Activated CD4-positive, alpha-beta memory T cell treated with anti-CD3 and anti-CD28 coated beads for 36 hours (primary cell): ENCODE measurements at regions of chr18 and their contacts with region 1.

Region 1: DNA sequence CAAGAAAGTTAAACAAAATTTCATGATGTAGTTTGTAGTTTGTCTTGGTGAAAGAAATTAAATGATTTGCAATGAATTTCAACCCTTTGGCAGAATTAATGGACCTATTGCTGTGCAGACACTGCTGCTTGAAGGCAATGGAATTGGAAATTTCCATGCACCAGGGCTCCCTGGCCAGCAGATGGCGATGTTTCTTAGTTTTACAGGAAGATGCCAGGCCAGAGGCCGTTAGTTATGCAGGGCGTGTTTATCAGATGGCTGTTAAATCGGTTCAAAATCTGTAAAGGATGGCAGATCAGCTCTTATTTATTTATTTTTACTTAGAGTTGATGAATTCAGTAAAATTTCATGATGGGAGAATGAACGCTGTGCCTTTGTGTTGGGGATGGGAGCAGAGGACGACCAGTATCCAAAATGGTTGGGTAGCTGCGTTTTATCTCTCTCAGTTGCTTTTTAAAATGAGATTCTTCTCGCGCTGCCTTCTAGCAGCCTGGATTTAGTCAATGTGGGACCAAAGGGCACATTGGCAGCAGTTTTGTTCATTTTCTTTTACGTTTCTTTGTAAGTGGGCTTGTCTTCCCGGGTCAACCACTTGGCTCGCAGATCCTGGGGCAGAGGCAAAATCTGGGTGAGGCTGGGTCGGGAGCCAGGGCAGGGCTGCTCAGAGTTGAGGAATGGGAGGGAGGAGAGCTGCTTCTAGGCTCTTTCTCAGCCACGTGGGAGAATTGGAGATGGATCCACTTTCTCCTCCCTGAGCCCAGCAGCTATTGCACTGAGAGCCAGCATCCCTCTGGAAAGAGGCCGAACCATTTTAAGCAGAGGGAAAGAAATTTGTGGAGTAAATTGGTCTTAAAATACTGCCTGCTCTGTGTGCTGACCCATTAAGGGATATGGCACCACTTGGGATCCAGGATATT is 344.0 kb downstream of the PIK3C3 start:
- DNase-seq: peak; percentile 69
- H3K4me3 Mint-ChIP-seq: no peak overlapping the region
- H3K27ac Mint-ChIP-seq: no peak overlapping the region
- H3K4me1 Mint-ChIP-seq: no peaks in the 10 kb centered on the region
- H3K27me3 Mint-ChIP-seq: peaks cover 5% of the 10 kb centered on the region

Region 2: GRCh38 chr18:41928581-41928980 is 370.4 kb before region 1 on chr18:
- CTCF ChIA-PET with region 1: no interaction called
- POLR2A ChIA-PET with region 1: no interaction called
- intact Hi-C with region 1: no loop called
- DNase-seq: no peak
- H3K4me3 Mint-ChIP-seq: no peak overlapping the region
- H3K27ac Mint-ChIP-seq: no peak overlapping the region
- H3K4me1 Mint-ChIP-seq: no peaks in the 10 kb centered on the region
- H3K27me3 Mint-ChIP-seq: peaks cover 2% of the 10 kb centered on the region

Region 3: GRCh38 chr18:42310956-42311355 is 11.9 kb after region 1 on chr18:
- CTCF ChIA-PET with region 1: interaction called, 10 read pairs
- POLR2A ChIA-PET with region 1: no interaction called
- intact Hi-C with region 1: no loop called
- DNase-seq: no peak
- H3K4me3 Mint-ChIP-seq: no peak overlapping the region
- H3K27ac Mint-ChIP-seq: no peak overlapping the region
- H3K4me1 Mint-ChIP-seq: no peaks in the 10 kb centered on the region
- H3K27me3 Mint-ChIP-seq: no peaks in the 10 kb centered on the region

Region 4: GRCh38 chr18:42336139-42336538 is 37.1 kb after region 1 on chr18:
- CTCF ChIA-PET with region 1: no interaction called
- POLR2A ChIA-PET with region 1: no interaction called
- intact Hi-C with region 1: no loop called
- DNase-seq: no peak
- H3K4me3 Mint-ChIP-seq: no peak overlapping the region
- H3K27ac Mint-ChIP-seq: no peak overlapping the region
- H3K4me1 Mint-ChIP-seq: no peaks in the 10 kb centered on the region
- H3K27me3 Mint-ChIP-seq: no peaks in the 10 kb centered on the region

Region 5: DNA sequence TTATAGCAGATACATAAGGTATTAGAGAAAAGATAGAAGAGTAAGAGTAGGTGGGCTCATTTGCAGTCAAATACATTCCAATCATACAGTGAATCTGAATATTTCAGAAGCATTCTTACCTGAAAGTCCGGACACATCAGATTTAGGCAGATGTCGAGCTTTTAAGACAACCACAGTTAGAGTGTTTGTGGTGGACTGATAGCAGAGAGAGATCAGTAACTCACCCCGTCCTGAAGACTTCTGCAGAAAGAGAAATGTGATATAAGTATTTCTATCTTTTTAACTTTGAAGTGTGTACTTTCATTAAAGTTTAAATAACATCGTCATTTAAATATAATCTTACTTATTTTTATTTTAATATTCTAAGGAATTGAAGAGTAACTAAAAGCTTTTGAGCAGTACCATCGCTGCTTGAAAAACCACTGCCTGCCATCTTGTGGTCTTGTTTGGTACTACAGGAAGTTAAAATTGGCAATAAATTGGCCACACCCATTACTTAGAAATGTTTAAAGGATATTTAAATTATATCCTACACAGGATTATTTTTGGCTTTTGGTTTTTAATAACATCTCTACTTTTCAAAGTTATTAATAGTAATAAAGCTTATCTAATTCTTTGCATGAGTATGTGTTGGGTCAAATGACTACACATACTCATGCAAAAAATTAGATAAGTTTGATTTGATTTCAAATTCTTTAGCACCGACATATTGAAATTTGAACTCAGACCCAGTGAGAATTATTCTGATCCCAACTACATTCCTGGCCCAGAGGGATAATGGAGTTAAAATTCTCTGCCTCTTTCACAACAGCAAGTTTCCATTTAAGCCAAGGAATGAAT is 972.8 kb after region 1 on chr18:
- CTCF ChIA-PET with region 1: interaction called, 18 read pairs
- POLR2A ChIA-PET with region 1: no interaction called
- intact Hi-C with region 1: loop called (anchors 1 kb)
- DNase-seq: no peak
- H3K4me3 Mint-ChIP-seq: no peak overlapping the region
- H3K27ac Mint-ChIP-seq: no peak overlapping the region
- H3K4me1 Mint-ChIP-seq: no peaks in the 10 kb centered on the region
- H3K27me3 Mint-ChIP-seq: no peaks in the 10 kb centered on the region

Region 6: GRCh38 chr18:43563780-43564179 is 1264.8 kb after region 1 on chr18:
- CTCF ChIA-PET with region 1: interaction called, 3 read pairs
- POLR2A ChIA-PET with region 1: no interaction called
- intact Hi-C with region 1: loop called (anchors 10 kb)
- DNase-seq: no peak
- H3K4me3 Mint-ChIP-seq: no peak overlapping the region
- H3K27ac Mint-ChIP-seq: no peak overlapping the region
- H3K4me1 Mint-ChIP-seq: no peaks in the 10 kb centered on the region
- H3K27me3 Mint-ChIP-seq: no peaks in the 10 kb centered on the region